ENCODE measurements at regions of chr19 and their contacts with region 1.

Region 1: DNA sequence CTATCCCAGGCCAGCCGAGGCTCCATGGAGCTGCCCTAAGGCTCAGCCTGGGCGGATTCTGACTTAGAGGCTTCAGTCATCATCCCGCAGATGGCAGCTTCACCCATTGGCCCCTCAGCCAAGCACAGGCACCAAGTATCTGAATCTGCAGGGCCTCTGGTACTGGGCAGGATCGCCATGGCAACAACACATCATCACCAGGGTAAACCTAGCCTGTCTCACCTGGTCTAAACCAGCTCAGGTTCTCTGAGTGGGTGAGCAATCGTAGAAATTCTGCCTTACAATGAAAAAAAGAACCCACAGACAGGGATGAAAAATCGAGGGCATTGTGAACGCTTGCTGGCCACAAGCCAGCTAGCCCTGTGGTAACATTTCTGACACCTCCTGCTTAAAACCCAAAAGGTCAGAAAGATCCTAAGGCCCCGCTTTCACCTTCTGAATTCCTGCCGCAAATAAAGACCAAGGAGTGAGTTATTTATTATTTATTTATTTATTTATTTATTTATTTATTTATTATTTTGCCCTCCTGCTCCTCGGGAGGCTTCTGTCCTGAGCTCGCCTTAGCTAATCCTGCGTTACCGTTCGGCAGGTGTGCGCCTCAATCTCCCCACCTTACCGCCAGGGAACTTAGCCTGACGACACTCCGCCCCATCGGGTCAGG is 12.0 kb upstream of the CEACAM21 start:
- DNase-seq: no peak
- ATAC-seq: no peak
- H3K4me3 ChIP-seq: peak overlapping the region in 7 of 12 donors; percentile 8 to 40 (median 13)
- H3K27ac ChIP-seq: no peak overlapping the region
- H3K4me1 ChIP-seq: peaks cover 0 to 32% (median 13%) of the 10 kb centered on the region in 12 donors
- H3K27me3 ChIP-seq: peaks cover 17 to 71% (median 38%) of the 10 kb centered on the region in 9 donors
- CTCF ChIP-seq: no peak
- POLR2A ChIP-seq: no peak

Region 2: GRCh38 chr19:41327576-41328156 is 236.3 kb before region 1 on chr19:
- intact Hi-C with region 1: loop called in 2 of 10 experiments (anchors 10 kb)
- DNase-seq: peak; percentile 78 to 91 (median 84)
- ATAC-seq: peak; percentile 8 to 57 (median 38)
- H3K4me3 ChIP-seq: peak overlapping the region in 10 of 12 donors; percentile 18 to 49 (median 44)
- H3K27ac ChIP-seq: peak overlapping the region; percentile 66 to 95 (median 88)
- H3K4me1 ChIP-seq: peaks cover 4 to 95% (median 63%) of the 10 kb centered on the region in 12 donors
- H3K27me3 ChIP-seq: no peaks in the 10 kb centered on the region
- CTCF ChIP-seq: no peak
- POLR2A ChIP-seq: no peak

Region 3: GRCh38 chr19:41541990-41542584 is 21.9 kb before region 1 on chr19:
- intact Hi-C with region 1: loop called in 4 of 10 experiments (anchors 1 to 2 kb)
- DNase-seq: peak in 4 of 5 donors; percentile 47 to 83 (median 53)
- ATAC-seq: no peak
- H3K4me3 ChIP-seq: no peak overlapping the region
- H3K27ac ChIP-seq: no peak overlapping the region
- H3K4me1 ChIP-seq: peaks cover 0 to 30% (median 3%) of the 10 kb centered on the region in 12 donors
- H3K27me3 ChIP-seq: peaks cover 0 to 14% (median 0%) of the 10 kb centered on the region in 9 donors
- CTCF ChIP-seq: peak; percentile 44 to 78 (median 64)
- POLR2A ChIP-seq: no peak

Region 4: DNA sequence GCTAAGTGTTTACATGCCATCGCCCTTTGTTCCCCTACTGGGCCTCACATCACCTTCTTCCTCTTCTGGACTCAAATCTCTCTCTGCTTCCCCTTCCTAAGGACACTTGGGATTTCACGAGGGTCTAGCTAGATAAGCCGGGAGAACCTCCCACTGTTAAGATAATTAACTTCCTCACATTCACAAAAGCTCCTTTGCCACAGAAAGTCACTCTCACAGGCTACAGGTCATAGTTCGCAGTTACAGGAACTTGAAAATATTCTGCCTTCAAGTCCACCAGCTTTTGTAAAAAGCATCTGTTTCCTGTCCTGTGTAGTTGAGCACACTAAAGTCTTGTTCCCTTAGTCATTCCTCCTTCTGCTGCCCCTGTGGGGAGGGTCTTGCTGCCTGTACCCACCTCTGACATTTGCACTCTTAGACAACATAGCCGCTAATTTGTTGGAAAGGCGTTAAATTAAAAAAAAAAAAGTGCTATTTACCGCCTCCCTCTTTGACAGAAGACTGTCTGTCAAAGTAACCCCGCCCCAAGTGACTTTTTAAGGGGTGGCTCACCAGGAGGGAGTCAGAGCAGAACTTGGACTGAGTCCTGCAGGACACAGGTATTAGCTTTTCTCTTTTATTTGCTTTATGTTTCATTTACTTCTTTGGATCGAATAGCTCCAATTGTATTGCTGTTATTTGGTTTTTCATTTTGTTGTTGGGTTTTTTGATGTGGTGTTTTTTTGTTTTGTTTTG is 14.9 kb before region 1 on chr19:
- intact Hi-C with region 1: loop called in 1 of 10 experiments (anchors 2 kb)
- DNase-seq: no peak
- ATAC-seq: peak in 3 of 4 donors; percentile 62 to 80 (median 67)
- H3K4me3 ChIP-seq: peak overlapping the region in 10 of 12 donors; percentile 4 to 65 (median 36)
- H3K27ac ChIP-seq: peak overlapping the region; percentile 23 to 93 (median 66)
- H3K4me1 ChIP-seq: peaks cover 0 to 92% (median 8%) of the 10 kb centered on the region in 12 donors
- H3K27me3 ChIP-seq: peaks cover 0 to 13% (median 0%) of the 10 kb centered on the region in 9 donors
- CTCF ChIP-seq: no peak
- POLR2A ChIP-seq: no peak

Measured in heart left ventricle (tissue), 16 donors.